ENCODE measurements at regions of chr3 and their contacts with region 1.

Region 1: DNA sequence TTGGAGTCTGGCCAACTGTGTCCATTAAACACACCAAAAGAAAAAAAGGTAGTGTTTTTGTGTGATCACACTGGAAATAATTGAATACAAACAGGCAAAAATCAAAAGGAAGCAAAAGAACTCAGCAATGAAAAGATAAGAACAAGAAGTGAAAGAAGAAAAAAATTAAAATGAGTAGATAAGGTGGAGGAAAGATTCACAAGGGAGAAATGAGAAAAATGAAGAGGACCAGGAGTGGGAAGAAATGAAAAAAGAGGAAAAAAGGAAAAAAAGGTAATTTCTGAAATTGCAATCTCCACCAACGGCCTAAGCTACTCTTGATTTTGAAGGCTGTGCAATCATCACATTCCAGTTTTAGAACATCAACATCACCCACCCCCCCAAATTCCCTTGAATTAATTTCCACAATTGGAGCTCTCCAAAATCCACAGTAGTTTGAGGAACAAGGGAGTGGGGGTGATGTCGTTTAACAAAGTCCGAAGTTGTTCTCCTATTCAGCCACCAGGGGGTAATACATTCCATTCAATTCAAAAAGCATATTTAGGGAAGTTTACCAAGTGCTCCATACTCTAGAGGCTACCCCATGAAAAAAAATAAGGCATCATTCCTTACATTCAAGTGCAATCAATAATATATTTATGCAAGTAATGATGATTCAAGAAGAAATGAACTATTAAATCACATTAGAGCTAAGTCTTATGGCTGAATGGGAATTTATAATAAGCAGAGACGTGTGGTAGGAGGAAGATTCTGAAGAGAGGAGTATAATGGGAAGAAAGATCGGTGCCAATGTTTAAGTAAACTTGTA is 37.4 kb downstream of the ZNF860 start:
- DNase-seq: peak; percentile 61 to 70
- ATAC-seq: peak; percentile 80 to 89; a peak in 5 of 6 replicates
- H3K4me3 ChIP-seq: no peak overlapping the region
- H3K27ac ChIP-seq: peak overlapping the region in 1 of 2 experiments; percentile 39; a peak in 1 of 6 replicates
- H3K4me1 ChIP-seq: peaks cover 11% of the 10 kb centered on the region; the same call in 2 of the 3 replicates
- CTCF ChIP-seq: peak; percentile 86
- EP300 ChIP-seq: no peak
- POLR2A ChIP-seq: no peak
- RAD21 ChIP-seq: peak; percentile 85 to 89

Region 2: DNA sequence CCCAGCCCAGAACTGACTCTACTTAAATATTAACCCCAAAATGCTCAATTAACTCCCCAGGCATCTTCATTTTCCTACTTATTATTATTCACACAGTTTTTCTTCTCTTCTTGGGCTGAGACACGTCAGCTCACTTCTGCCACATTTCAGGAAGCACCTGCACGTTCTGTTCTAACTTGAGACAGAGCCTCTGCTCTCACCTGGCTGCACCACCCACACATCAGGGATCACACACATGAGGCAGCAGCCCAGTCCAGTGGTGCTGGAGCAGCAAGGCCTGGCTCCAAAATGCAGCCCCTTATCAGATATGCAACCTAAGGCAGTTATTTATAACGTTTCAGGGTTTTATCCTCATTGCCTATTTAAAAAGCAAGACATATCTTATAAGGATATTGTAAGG is 165.4 kb before region 1 on chr3:
- CTCF ChIA-PET with region 1: no interaction called
- POLR2A ChIA-PET with region 1: no interaction called
- DNase-seq: no peak
- ATAC-seq: no peak
- H3K4me3 ChIP-seq: no peak overlapping the region
- H3K27ac ChIP-seq: no peak overlapping the region
- H3K4me1 ChIP-seq: no peaks in the 10 kb centered on the region
- CTCF ChIP-seq: no peak
- EP300 ChIP-seq: no peak
- POLR2A ChIP-seq: no peak
- RAD21 ChIP-seq: no peak

Region 3: DNA sequence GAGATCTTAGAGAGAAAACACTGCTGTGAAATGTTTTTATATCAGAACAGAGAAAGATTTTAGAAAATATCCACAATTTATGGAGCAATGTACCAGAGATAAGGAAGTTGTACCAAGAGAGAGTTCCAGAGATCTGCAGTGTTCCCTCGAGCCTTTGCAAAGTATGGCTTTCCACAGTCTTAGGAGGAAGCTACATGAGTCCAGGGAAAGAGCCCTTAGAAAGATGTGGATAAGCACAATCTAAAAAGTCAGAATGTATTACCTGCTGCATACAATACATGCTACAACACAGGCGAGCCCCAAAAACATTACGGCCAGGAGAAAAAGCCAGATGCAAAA is 18.9 kb after region 1 on chr3:
- CTCF ChIA-PET with region 1: interaction called, 12 read pairs
- POLR2A ChIA-PET with region 1: no interaction called
- DNase-seq: no peak
- ATAC-seq: no peak
- H3K4me3 ChIP-seq: no peak overlapping the region
- H3K27ac ChIP-seq: no peak overlapping the region; a peak in 1 of 6 replicates
- H3K4me1 ChIP-seq: no peaks in the 10 kb centered on the region
- CTCF ChIP-seq: no peak
- EP300 ChIP-seq: no peak
- POLR2A ChIP-seq: no peak
- RAD21 ChIP-seq: no peak

Region 4: DNA sequence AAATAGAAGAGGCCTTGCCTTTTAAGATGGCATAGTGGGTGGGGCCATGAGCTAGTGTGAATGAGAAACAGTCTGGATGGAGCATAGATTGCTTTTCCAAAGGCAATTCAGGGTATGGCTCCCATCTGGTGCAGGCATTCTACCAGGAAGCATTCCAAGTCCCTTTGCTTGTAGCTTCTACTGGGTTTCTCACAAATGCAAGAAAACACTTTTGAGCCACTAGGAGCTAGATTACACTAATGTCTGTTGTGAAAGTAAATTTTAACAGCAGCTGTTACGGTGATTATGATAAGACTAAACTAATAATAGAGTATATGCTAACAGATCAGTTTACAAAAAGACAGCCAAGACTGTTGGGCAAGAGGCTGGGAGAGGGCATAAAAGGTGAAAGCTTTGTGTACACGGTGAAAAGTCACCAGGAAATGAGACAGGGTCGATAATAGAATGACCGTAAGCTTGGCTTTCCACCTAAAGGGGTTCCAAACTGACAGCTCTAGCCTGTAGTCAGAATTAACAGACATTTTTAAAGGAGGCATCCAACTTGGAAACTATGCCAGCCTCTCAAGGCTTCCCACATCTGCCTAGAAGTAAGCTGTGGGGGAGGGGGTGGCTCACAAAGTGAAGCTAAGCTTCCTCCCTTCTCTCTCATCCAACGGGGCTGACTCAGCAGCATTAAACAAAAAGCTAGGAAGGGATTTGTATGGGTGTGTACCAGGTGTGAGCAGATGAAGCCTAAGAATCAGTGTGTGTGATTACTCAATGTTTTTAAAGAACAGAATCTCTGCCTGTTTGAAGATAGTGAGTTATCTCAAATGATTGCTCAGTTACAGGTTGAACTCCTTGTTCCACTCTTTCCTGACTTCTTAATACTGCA is 26.4 kb after region 1 on chr3:
- CTCF ChIA-PET with region 1: interaction called, 13 read pairs
- POLR2A ChIA-PET with region 1: no interaction called
- DNase-seq: peak; percentile 53 to 77
- ATAC-seq: peak; percentile 87 to 91
- H3K4me3 ChIP-seq: peak overlapping the region; percentile 7; the same call in 1 of the 3 replicates
- H3K27ac ChIP-seq: peak overlapping the region; percentile 70 to 80
- H3K4me1 ChIP-seq: peaks cover 22% of the 10 kb centered on the region
- CTCF ChIP-seq: no peak
- EP300 ChIP-seq: 0 out of 5 replicates have a peak, but pooled peaks of 1 of the 2 experiments have one; percentile 26
- POLR2A ChIP-seq: no peak
- RAD21 ChIP-seq: no peak

Region 5: GRCh38 chr3:32106280-32106928 is 87.4 kb after region 1 on chr3 and contains the start of gene GPD1L:
- CTCF ChIA-PET with region 1: interaction called, 19 read pairs
- POLR2A ChIA-PET with region 1: no interaction called
- DNase-seq: peak; percentile 78 to 95
- ATAC-seq: peak; percentile 91 to 97
- H3K4me3 ChIP-seq: peak within 1 kb of the TSS; percentile 95
- H3K27ac ChIP-seq: peak within 1 kb of the TSS; percentile 88 to 91
- H3K4me1 ChIP-seq: peaks cover 53% of the 10 kb centered on the region
- CTCF ChIP-seq: no peak
- EP300 ChIP-seq: no peak
- POLR2A ChIP-seq: peak; percentile 22
- RAD21 ChIP-seq: no peak
- polyA plus RNA-seq, gene GPD1L: 30.6 and 31.0 TPM in 2 replicates

Region 6: DNA sequence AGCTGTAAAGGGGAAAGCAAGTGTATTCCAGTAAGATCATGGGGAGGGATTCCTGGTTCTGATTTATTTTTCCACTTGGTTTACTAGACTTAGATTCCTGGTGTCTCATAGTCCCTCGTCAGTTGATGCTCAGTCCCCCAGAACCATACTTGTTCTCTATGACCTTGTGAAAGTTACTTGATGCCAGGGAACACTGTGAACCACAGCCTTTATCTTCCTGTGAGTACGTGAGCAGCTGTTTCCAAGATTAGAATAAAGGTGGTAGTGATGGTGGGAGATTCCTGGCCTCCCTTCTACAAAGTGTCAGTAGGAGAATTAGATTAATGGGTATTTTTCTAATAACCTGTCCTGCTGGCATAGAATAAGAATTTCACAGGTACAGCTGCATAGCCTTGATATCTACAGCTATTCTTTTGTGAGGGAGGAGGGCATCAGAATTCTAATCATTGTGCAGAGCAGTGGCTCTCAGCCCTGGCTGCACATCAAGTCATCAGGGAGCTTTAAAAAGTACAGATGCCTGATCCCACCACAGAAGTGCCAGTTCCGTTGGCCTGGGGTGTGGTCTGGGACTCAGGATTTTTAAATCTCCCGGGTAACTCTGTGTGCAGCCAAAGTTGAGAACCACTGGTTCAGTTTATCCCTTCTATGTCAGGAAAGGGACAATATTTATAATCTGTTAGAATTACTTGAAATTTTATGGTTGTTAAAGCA is 107.5 kb after region 1 on chr3:
- CTCF ChIA-PET with region 1: interaction called, 26 read pairs
- POLR2A ChIA-PET with region 1: no interaction called
- DNase-seq: no peak
- ATAC-seq: no peak
- H3K4me3 ChIP-seq: no peak overlapping the region
- H3K27ac ChIP-seq: no peak overlapping the region
- H3K4me1 ChIP-seq: no peaks in the 10 kb centered on the region
- CTCF ChIP-seq: no peak
- EP300 ChIP-seq: no peak
- POLR2A ChIP-seq: no peak
- RAD21 ChIP-seq: no peak

Region 7: DNA sequence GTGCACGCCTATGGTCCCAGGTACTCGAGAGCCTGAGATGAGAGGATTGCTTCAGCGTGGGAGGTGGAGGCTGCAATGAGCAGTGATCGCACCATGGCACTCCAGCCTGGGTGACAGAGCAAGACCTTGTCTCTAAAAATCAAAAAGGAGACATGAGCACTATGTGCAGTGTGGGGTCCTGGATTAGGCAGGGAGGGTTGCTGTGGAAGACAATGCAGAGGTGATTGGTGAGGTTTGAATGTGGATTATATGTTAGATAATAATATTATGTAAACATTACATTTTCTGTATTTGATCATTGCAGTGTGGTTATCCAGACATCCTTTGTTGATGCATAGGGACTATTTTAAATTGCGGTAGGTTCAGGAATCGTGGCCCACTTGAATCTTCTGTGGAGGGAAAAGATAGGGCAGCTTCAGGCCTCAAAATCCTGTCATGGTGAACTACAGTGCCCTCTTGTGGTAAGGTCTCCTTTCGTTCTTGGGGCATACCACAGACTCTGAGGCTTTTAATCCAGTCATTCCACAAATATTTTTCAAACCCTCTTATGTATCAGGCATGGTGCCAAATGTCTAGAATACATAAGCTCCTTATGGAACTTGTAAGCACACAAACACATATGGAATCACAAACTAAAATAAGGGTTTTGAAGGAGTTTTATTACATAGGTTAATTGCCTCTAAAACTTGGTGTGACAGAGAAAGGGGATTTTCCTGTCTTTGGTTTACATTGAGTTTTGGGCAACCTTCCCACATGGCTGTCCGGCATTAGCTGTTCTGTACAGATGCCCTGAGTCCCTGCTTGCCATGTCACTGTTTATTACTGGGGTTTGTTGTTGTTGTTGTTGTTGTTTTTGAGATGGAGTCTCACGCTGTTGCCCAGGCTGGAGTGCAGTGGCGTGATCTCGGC is 125.1 kb after region 1 on chr3:
- CTCF ChIA-PET with region 1: interaction called, 38 read pairs
- POLR2A ChIA-PET with region 1: no interaction called
- DNase-seq: peak; percentile 62 to 83
- ATAC-seq: peak; percentile 93 to 98
- H3K4me3 ChIP-seq: no peak overlapping the region
- H3K27ac ChIP-seq: peak overlapping the region in 1 of 2 experiments; percentile 44; a peak in 2 of 6 replicates
- H3K4me1 ChIP-seq: peaks cover 12% of the 10 kb centered on the region
- CTCF ChIP-seq: peak; percentile 89
- EP300 ChIP-seq: no peak
- POLR2A ChIP-seq: no peak
- RAD21 ChIP-seq: peak; percentile 90

Region 8: GRCh38 chr3:32154205-32154579 is 135.2 kb after region 1 on chr3:
- CTCF ChIA-PET with region 1: interaction called, 18 read pairs
- POLR2A ChIA-PET with region 1: no interaction called
- DNase-seq: peak in 1 of 2 experiments; percentile 18
- ATAC-seq: peak; percentile 84 to 95; a peak in 5 of 6 replicates
- H3K4me3 ChIP-seq: no peak overlapping the region
- H3K27ac ChIP-seq: no peak overlapping the region
- H3K4me1 ChIP-seq: no peaks in the 10 kb centered on the region
- CTCF ChIP-seq: peak; percentile 32; the same call in 2 of the 3 replicates
- EP300 ChIP-seq: no peak
- POLR2A ChIP-seq: no peak
- RAD21 ChIP-seq: peak; percentile 39 to 44